WTC11 (cell line): ENCODE measurements at regions of chr17 and their contacts with region 1.

Region 1: GRCh38 chr17:44350733-44351226 is 5.7 kb downstream of the GRN start:
- DNase-seq: peak; percentile 82
- ATAC-seq: peak; percentile 68
- H3K4me3 Mint-ChIP-seq: no peak overlapping the region
- H3K27ac Mint-ChIP-seq: no peak overlapping the region
- H3K4me1 Mint-ChIP-seq: peaks cover 14% of the 10 kb centered on the region
- H3K27me3 Mint-ChIP-seq: peaks cover 3% of the 10 kb centered on the region; the same call in 1 of the 2 replicates
- CTCF ChIP-seq: peak; percentile 69

Region 2: GRCh38 chr17:44186307-44187130 is 164.3 kb before region 1 on chr17 and contains the start of gene TMUB2:
- CTCF ChIA-PET with region 1: interaction called, 13 read pairs
- POLR2A ChIA-PET with region 1: no interaction called
- DNase-seq: peak; percentile 100
- ATAC-seq: peak; percentile 93
- H3K4me3 Mint-ChIP-seq: peak within 1 kb of the TSS; percentile 100
- H3K27ac Mint-ChIP-seq: peak within 1 kb of the TSS; percentile 99
- H3K4me1 Mint-ChIP-seq: peaks cover 18% of the 10 kb centered on the region
- H3K27me3 Mint-ChIP-seq: no peaks in the 10 kb centered on the region
- CTCF ChIP-seq: no peak
- total RNA-seq, gene TMUB2: 21.9 to 26.9 TPM (median 25.3 TPM) in 3 replicates

Region 3: GRCh38 chr17:44210342-44211192 is 140.2 kb before region 1 on chr17:
- CTCF ChIA-PET with region 1: interaction called, 61 read pairs
- POLR2A ChIA-PET with region 1: interaction called, 4 read pairs
- DNase-seq: peak; percentile 94
- ATAC-seq: peak; percentile 89
- H3K4me3 Mint-ChIP-seq: no peak overlapping the region
- H3K27ac Mint-ChIP-seq: peak overlapping the region; percentile 42
- H3K4me1 Mint-ChIP-seq: peaks cover 20% of the 10 kb centered on the region
- H3K27me3 Mint-ChIP-seq: no peaks in the 10 kb centered on the region
- CTCF ChIP-seq: peak; percentile 95

Region 4: DNA sequence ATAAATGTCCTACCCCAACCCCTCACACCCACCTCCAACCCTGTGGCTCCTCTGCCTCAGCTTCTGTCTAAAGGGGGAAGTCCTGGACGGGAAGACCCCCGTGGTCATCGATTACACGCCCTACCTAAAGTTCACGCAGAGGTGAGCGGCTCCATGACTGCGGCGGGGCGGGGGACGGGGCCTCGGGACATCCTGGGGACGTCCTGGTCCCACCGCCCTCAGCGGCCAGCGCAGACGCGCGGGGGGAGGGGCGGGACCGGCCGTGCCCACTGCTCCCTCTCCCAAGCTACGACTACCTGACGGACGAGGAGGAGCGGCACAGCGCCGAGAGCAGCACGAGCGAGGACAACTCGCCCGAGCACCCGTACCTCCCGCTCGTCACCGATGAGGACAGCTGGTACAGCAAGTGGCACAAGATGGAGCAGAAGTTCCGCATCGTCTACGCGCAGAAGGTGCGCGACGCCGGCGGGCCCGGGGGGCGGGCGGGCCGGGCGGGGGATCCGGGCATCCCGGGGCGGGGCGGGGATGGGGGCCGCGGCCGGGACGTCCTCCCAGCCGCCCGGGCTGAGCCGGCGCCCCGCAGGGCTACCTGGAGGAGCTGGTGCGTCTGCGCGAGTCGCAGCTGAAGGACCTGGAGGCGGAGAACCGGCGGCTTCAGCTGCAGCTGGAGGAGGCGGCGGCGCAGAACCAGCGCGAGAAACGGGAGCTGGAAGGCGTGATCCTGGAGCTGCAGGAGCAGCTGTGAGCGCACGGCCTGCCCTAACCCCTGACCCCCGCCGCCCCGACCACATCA is 35.7 kb before region 1 on chr17:
- CTCF ChIA-PET with region 1: interaction called, 44 read pairs
- POLR2A ChIA-PET with region 1: interaction called, 3 read pairs
- DNase-seq: peak; percentile 76
- ATAC-seq: peak; percentile 13
- H3K4me3 Mint-ChIP-seq: peak overlapping the region; percentile 79
- H3K27ac Mint-ChIP-seq: no peak overlapping the region
- H3K4me1 Mint-ChIP-seq: peaks cover 39% of the 10 kb centered on the region
- H3K27me3 Mint-ChIP-seq: peaks cover 37% of the 10 kb centered on the region
- CTCF ChIP-seq: no peak

Region 5: DNA sequence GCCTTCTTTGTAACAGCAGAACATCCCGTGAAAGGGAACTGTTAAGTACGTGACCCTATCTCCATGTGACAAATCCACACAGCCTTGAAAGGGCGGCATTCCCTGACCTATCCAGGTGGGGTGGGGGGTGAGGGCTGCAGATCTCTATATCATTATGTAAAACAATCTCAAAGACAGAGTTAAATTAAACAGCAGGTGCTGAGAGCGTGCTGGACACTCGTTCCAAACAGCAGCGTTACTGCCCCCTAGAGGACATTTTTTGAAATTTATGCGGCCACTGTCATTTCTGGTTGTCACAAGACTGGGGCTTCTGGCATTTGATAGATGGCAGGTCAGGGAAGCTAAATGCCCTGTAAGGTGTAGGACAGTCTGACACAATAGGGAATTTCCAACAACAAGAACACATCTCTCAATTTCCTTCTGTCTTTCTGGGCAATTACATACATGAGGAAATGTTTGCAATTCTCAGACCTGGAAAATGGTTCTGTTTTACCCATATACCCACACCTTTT is 19.5 kb before region 1 on chr17:
- CTCF ChIA-PET with region 1: interaction called, 78 read pairs
- POLR2A ChIA-PET with region 1: interaction called, 4 read pairs
- DNase-seq: peak; percentile 80
- ATAC-seq: peak; percentile 19
- H3K4me3 Mint-ChIP-seq: no peak overlapping the region
- H3K27ac Mint-ChIP-seq: no peak overlapping the region
- H3K4me1 Mint-ChIP-seq: peaks cover 17% of the 10 kb centered on the region
- H3K27me3 Mint-ChIP-seq: peaks cover 3% of the 10 kb centered on the region; the same call in 1 of the 2 replicates
- CTCF ChIP-seq: peak; percentile 76

Region 6: DNA sequence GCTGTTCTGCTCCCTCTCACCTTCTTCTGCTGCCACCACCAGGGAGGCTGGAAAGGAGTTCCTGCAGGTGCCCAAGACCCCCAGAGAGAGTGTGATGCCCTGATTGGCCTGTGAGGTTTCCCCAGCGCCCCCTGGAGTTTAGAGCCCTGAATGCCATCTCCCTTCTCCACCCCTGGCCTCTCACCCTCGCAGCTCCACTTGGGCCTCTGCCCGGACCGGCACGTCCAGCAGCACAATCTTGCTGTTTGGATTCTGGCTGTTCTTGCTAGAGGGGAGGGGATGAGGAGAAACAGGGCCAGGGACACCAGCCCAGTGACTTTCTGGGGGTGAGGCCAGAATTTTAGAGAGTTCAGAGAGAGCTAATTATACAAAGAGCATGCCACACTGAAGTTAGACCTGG is 25.3 kb after region 1 on chr17:
- CTCF ChIA-PET with region 1: interaction called, 64 read pairs
- POLR2A ChIA-PET with region 1: interaction called, 3 read pairs
- DNase-seq: peak; percentile 74
- ATAC-seq: peak; percentile 46
- H3K4me3 Mint-ChIP-seq: 0 out of 2 replicates have a peak overlapping the region, but pooled peaks have one; percentile 18
- H3K27ac Mint-ChIP-seq: no peak overlapping the region
- H3K4me1 Mint-ChIP-seq: peaks cover 27% of the 10 kb centered on the region
- H3K27me3 Mint-ChIP-seq: peaks cover 5% of the 10 kb centered on the region; the same call in 1 of the 2 replicates
- CTCF ChIP-seq: peak; percentile 55

Region 7: DNA sequence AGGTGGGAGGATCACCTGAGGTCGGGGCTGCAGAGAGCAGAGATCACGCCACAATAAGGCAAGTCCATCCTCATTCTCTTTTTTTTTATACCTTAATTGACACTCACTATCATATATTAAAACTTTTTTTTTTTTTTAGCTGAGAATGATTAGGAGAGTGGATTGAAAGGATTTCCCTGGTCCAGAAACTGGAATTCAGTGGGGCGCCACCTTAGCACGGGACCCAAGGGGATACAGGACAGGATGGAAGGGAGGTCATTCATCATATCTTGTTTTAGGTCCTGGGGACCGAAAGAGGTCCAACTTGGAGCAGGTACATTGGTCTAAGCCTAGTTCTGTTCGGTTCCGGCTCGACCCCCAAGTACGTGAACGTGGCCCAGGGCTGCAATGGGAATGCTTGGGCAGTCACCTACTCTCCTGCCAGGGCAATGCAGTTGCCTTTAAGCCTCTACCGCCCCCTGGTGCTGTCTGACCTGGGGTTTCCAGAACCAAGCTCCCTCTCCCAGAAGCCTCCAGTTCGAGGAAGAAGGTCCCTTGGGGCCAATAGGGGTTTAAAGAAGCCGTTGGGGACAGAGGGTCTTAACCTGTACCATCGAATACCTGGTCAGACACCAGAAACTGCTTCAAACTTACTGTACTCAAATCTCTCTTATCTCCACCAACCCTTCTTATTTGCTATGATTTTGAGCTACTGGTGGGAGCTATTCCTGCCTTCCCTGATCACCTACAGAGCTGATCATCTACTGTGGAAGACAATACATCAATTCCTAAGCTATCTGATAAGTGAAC is 172.3 kb after region 1 on chr17:
- CTCF ChIA-PET with region 1: interaction called, 46 read pairs
- POLR2A ChIA-PET with region 1: no interaction called
- DNase-seq: peak; percentile 91
- ATAC-seq: peak; percentile 99
- H3K4me3 Mint-ChIP-seq: no peak overlapping the region
- H3K27ac Mint-ChIP-seq: no peak overlapping the region
- H3K4me1 Mint-ChIP-seq: no peaks in the 10 kb centered on the region
- H3K27me3 Mint-ChIP-seq: peaks cover 14% of the 10 kb centered on the region
- CTCF ChIP-seq: 0 out of 2 replicates have a peak, but pooled peaks have one; percentile 51